ENCODE measurements at regions of chr17 and their contacts with region 1.

Region 1: GRCh38 chr17:49952209-49952911 is 16.6 kb upstream of the DLX4 start:
- H3K4me3 ChIP-seq: no peak overlapping the region
- H3K27ac ChIP-seq: no peak overlapping the region
- H3K4me1 ChIP-seq: no peaks in the 10 kb centered on the region
- CTCF ChIP-seq: peak; percentile 84

Region 2: GRCh38 chr17:49861150-49861892 is 91.0 kb before region 1 on chr17:
- CTCF ChIA-PET with region 1: interaction called, 21 read pairs
- POLR2A ChIA-PET with region 1: no interaction called
- H3K4me3 ChIP-seq: no peak overlapping the region
- H3K27ac ChIP-seq: no peak overlapping the region
- H3K4me1 ChIP-seq: no peaks in the 10 kb centered on the region
- CTCF ChIP-seq: peak; percentile 89

Region 3: DNA sequence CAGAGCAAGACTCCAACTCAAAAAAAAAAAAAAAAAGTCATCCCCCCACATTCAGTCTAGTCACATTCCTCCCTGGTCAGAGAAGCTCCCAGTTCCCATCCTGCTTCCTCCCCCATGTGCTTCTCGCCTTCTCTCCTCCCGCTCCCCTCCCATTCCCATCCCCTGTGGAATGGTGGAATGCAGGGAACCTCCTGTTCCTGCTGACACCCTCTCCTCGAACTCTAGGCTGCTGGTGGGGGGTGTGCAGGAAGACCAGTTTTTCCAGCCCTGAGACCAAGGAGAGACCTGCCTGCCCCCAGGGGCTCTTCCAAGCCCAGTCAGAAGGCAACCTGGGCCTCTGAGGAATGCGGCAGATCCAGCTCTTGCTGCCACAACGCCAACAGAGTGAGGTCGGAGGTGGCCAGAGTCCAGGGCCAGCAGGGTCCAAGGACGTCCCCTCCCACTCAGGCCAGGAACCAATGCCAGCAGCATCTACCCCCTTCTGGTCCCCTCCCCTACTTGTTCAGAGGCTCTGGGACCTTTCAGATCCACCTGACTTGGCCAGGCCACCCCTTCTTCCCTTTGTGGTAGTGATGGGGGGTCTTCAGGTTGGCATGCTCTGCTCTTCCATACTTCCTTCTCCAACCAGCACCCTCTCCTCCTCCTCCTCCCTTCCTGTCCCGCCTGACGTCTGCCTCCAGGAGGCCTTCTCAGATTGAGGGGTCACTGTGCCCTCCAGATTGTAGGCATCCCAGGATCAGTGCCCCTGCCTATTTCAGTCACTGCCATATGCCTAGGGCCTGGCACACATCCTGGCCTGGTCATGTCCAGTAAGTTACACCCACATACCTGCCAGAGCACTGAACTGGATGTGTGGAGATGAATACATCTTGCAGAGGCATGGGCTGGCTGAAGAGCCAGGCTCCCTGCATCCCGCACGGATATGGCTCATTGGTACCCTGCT is 65.0 kb before region 1 on chr17:
- CTCF ChIA-PET with region 1: interaction called, 21 read pairs
- POLR2A ChIA-PET with region 1: no interaction called
- H3K4me3 ChIP-seq: no peak overlapping the region
- H3K27ac ChIP-seq: no peak overlapping the region
- H3K4me1 ChIP-seq: no peaks in the 10 kb centered on the region
- CTCF ChIP-seq: no peak

Region 4: GRCh38 chr17:49910094-49910857 is 42.1 kb before region 1 on chr17:
- CTCF ChIA-PET with region 1: interaction called, 20 read pairs
- POLR2A ChIA-PET with region 1: no interaction called
- H3K4me3 ChIP-seq: no peak overlapping the region
- H3K27ac ChIP-seq: no peak overlapping the region
- H3K4me1 ChIP-seq: no peaks in the 10 kb centered on the region
- CTCF ChIP-seq: no peak

Region 5: DNA sequence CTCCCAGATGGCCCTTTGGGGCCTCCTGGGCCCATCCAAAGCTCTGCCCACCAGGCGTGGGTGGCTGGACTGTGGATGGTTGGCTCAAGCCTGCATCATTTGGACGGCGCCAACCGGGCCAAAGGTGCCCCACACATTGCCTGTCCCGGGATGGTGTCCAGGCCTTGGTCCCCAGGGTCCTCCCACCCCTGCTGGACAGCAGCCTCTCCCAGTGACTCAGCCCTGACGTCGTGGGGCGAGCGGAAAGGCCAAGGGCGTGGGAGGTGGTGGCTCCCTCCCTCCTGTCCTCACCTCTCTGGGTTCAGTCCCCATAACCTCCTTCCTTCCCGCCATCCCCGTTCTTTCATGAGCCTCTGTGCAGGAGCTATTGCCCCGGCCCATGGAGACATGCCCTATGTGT is 25.5 kb before region 1 on chr17:
- CTCF ChIA-PET with region 1: interaction called, 18 read pairs
- POLR2A ChIA-PET with region 1: no interaction called
- H3K4me3 ChIP-seq: no peak overlapping the region
- H3K27ac ChIP-seq: no peak overlapping the region
- H3K4me1 ChIP-seq: no peaks in the 10 kb centered on the region
- CTCF ChIP-seq: no peak

Region 6: GRCh38 chr17:49968380-49969133 is 16.2 kb after region 1 on chr17:
- CTCF ChIA-PET with region 1: interaction called, 47 read pairs
- POLR2A ChIA-PET with region 1: no interaction called
- H3K4me3 ChIP-seq: peak overlapping the region; percentile 70
- H3K27ac ChIP-seq: peak overlapping the region; percentile 84
- H3K4me1 ChIP-seq: no peaks in the 10 kb centered on the region
- CTCF ChIP-seq: no peak

Region 7: GRCh38 chr17:49987681-49988441 is 35.5 kb after region 1 on chr17:
- CTCF ChIA-PET with region 1: interaction called, 67 read pairs
- POLR2A ChIA-PET with region 1: no interaction called
- H3K4me3 ChIP-seq: no peak overlapping the region
- H3K27ac ChIP-seq: no peak overlapping the region
- H3K4me1 ChIP-seq: no peaks in the 10 kb centered on the region; the same call in 1 of the 2 replicates
- CTCF ChIP-seq: no peak

Region 8: DNA sequence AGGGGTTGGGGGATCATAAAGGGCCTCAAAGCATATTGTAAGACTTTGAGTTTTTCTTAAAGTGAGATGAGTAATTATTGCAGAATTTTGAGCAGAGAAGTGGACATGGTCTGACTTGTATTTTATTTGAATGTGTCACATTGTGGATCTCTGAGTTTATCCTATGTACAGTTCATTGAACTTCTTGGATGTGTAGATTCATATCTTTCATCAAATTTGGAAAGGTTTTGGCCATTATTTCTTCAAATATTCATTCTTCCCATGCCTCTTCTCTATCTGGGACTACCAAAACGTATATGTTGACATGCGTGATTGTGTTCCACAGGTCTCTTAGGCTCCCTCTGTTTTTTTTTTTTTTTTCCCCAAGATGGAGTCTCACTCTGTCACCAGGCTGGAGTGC is 56.9 kb after region 1 on chr17:
- CTCF ChIA-PET with region 1: no interaction called
- POLR2A ChIA-PET with region 1: no interaction called
- H3K4me3 ChIP-seq: no peak overlapping the region
- H3K27ac ChIP-seq: no peak overlapping the region
- H3K4me1 ChIP-seq: no peaks in the 10 kb centered on the region
- CTCF ChIP-seq: no peak

Region 9: DNA sequence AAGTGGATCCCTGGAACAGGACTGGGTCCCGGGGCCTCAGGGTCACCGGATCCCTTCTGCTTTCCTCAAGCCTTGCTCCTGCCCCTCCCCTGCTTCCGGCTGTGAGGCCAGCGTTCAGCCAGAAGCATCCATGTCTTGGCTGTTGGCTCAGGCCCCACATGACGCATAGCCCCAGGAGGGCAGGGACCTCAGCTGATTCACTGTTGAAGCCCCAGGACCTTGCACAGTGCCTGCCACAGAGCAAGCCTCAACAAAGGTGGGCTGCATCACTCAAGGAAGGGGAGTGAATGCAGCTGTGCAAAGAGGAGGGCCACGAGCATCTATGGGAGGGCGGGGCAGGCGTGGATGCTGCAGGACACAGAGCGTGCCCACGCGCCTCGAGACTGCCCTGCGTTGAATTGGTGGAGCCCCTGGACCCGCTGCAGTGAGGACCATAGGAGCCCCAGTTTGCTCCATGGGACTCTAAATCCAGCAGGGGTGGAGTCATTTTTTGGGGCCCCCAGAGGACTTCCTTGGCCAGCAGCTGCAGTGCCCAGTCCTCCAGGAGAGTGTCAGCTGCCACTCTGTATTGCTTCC is 75.4 kb after region 1 on chr17:
- CTCF ChIA-PET with region 1: no interaction called
- POLR2A ChIA-PET with region 1: no interaction called
- H3K4me3 ChIP-seq: no peak overlapping the region
- H3K27ac ChIP-seq: no peak overlapping the region
- H3K4me1 ChIP-seq: no peaks in the 10 kb centered on the region
- CTCF ChIP-seq: no peak

Region 10: GRCh38 chr17:50289991-50290702 is 337.8 kb after region 1 on chr17:
- CTCF ChIA-PET with region 1: no interaction called
- POLR2A ChIA-PET with region 1: no interaction called
- H3K4me3 ChIP-seq: no peak overlapping the region
- H3K27ac ChIP-seq: no peak overlapping the region
- H3K4me1 ChIP-seq: peaks cover 5% of the 10 kb centered on the region; the same call in 1 of the 2 replicates
- CTCF ChIP-seq: no peak

Measured in HEK293 (cell line).